Vagina (tissue), 2 donors: ENCODE measurements at regions of chr5 and their contacts with region 1.

Region 1: DNA sequence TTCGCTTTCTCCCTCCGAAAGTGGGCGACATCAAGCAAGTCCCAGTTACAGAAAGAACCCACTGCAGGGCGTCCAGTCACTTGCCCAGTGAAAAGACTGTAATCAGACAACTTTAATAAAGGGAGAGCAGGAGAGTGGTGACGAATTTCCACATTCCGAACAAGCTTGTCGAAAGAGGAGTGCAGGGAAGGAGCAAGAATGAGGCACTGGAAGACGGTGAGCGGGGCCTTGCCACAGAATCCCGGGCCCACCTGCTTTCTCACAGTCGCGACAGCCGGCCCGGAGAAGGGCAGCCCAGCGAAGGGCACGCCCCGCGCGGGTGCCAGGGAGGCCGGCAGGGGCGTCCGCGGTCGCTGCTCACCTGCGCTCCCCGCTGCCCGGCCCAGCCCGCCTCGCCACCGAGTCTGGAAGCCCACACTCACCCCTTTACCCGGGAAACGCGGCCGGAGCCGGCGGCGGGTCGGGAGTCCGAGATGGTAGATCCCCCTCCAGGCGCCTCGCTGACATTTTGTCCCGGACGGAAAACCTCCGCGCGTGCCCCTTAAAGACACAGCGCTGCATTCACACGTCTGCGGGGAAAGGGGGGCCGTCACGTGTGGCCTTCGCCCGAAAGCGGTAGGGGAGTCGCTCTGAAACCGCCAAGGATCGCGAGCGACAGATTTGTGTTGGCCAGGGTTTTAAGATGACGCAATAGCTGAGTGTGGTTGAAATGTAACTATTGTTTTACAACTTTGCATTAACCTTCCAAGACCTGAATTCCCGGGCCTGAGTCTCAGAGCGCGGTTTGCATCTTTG is at the start of gene ZBED3:
- DNase-seq: peak in 1 of 2 donors; percentile 92
- H3K4me3 ChIP-seq: peak within 1 kb of the TSS; percentile 56 to 79
- H3K27ac ChIP-seq: peak within 1 kb of the TSS; percentile 83
- H3K4me1 ChIP-seq: peaks cover 17% of the 10 kb centered on the region
- H3K27me3 ChIP-seq: no peaks in the 10 kb centered on the region
- CTCF ChIP-seq: no peak
- POLR2A ChIP-seq: no peak
- total RNA-seq, gene ZBED3: 9.1 TPM

Region 2: DNA sequence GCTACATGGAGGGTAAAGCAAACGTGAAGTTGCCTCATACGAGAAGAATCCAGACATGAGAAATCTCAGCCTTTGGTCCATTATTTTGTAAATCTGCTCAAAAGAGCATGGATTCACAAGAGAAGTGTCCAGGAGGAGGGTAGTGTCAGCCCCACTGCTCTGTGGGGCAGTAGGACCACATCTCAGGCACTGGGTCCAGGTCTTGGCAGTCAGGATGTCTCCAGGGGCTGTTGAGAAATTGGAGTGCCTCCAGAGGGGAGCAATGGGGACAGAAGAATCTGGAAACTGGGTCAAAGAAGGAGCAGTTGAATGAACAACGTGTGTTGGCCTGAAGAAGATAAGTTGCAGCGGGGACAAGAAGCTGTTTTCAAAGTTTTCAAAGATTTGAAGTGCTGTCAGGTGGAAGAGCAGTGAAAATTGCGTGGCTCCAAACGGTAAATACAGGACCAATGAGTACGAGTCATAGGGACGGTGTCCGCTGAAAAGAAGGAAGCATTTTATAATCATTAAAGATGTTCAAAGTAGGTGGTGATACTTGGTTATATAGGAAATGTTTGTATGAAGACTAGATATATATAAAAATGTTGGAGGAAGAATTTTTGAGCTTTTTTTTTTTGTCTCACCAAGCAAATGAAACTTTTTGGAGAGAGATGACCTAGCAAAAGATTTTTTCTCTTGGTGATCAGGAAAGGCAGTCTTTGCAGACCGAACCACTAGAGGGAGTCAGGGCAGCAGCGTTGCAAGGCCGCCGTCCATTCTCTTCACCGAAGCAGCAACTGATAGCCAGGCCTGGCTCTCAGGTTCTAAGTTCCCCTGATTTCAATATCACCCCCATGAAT is 57.3 kb after region 1 on chr5:
- intact Hi-C with region 1: loop called (anchors 5 kb)
- DNase-seq: no peak
- H3K4me3 ChIP-seq: no peak overlapping the region
- H3K27ac ChIP-seq: no peak overlapping the region
- H3K4me1 ChIP-seq: no peaks in the 10 kb centered on the region
- H3K27me3 ChIP-seq: no peaks in the 10 kb centered on the region
- CTCF ChIP-seq: peak; percentile 15 to 66 (median 43)
- POLR2A ChIP-seq: no peak